ENCODE measurements at regions of chr5 and their contacts with region 1.

Region 1: GRCh38 chr5:112995764-112996618 is 19.4 kb downstream of the DCP2 start:
- DNase-seq: peak; percentile 62
- ATAC-seq: peak; percentile 85

Region 2: DNA sequence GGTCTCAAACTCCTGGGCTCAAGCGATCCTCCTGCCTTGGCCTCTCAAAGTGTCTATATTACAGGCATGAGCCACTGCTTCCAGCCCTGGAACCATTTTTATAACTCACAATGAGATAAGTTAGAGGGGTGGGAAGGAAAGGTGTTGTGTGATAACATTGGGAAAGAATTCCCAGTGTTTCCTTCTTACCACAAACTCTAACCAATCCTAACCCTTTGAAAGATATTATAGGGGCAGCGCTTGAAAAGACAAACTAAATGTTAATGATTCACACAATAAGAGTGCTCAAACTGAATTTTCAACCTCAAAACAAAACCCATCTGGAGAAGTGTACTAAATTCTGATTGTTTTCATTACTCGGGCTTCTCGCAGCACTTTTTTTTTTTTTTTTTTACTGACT is 329.1 kb after region 1 on chr5:
- intact Hi-C with region 1: loop called (anchors 5 kb)
- DNase-seq: no peak
- ATAC-seq: no peak

Region 3: GRCh38 chr5:113513384-113514288 is 517.6 kb after region 1 on chr5 and contains the start of gene YTHDC2:
- intact Hi-C with region 1: loop called (anchors 5 kb)
- DNase-seq: peak; percentile 94
- ATAC-seq: peak; percentile 99
- total RNA-seq, gene YTHDC2: 13.4 TPM

Region 4: GRCh38 chr5:113606298-113607134 is 610.5 kb after region 1 on chr5:
- intact Hi-C with region 1: loop called (anchors 10 kb)
- DNase-seq: peak; percentile 37
- ATAC-seq: peak; percentile 95

Measured in left ventricle myocardium superior (tissue), 1 donor.